Activated CD4-positive, alpha-beta T cell treated with anti-CD3 and anti-CD28 coated beads, Interleukin-2, amount 10 ng/mL, durations not matched to agents 24 days and 14 days (primary cell): ENCODE measurements at regions of chr12 and their contacts with region 1.

Region 1: DNA sequence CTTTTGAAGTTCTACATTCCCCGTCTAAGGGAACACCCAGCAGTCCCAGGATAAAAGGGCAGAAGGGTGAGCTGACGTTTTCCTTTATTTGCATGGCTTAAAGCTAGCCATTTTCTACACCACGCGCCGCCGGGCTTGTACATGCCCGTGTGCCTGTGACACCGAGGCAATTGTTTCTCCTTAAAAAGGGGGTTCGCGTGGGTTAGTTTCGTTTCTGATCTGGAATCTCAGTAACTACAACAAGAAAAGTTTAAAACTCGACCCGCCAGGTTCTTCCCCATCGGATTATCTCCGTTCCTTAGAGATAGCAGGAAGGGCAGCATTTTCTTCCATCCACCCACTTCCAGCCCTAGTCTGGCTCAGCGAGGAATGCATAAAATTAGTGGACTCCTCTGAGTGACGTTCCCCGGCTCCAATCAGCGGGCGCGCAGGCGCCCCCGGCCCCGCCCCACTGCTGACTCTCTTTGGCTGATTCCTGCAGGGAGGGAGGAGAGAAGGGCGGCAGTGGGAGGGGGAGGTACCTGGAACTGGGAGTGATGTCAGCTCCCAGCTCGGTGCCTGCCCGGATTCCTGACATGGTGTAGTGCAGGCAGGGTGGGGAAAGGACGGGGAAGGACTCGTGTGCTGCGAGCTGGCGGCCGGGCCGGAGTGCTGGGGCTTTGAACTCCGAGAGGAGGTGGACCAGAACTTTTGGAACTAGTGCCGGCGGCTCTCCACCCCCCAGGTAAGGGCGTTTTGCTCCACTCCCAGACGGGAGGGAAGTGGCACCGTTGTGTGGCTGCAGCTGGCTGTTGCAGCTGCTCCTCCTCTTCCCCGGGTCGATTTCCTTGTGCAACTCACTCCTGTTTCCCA is at the start of gene PPFIBP1:
- DNase-seq: peak; percentile 96
- H3K4me3 Mint-ChIP-seq: peak within 1 kb of the TSS; percentile 96
- H3K27ac Mint-ChIP-seq: peak within 1 kb of the TSS; percentile 91
- H3K4me1 Mint-ChIP-seq: peaks cover 34% of the 10 kb centered on the region
- H3K27me3 Mint-ChIP-seq: peaks cover 42% of the 10 kb centered on the region
- total RNA-seq, gene PPFIBP1: 29.0 and 32.0 TPM in 2 replicates

Region 2: GRCh38 chr12:27179400-27180214 is 344.3 kb before region 1 on chr12:
- intact Hi-C with region 1: no loop called
- DNase-seq: peak; percentile 80
- H3K4me3 Mint-ChIP-seq: peak overlapping the region; percentile 61
- H3K27ac Mint-ChIP-seq: peak overlapping the region; percentile 87
- H3K4me1 Mint-ChIP-seq: peaks cover 39% of the 10 kb centered on the region
- H3K27me3 Mint-ChIP-seq: no peaks in the 10 kb centered on the region

Region 3: GRCh38 chr12:27434673-27435565 is 88.9 kb before region 1 on chr12:
- intact Hi-C with region 1: loop called (anchors 5 kb)
- DNase-seq: peak; percentile 66
- H3K4me3 Mint-ChIP-seq: no peak overlapping the region
- H3K27ac Mint-ChIP-seq: peak overlapping the region; percentile 52
- H3K4me1 Mint-ChIP-seq: peaks cover 51% of the 10 kb centered on the region
- H3K27me3 Mint-ChIP-seq: no peaks in the 10 kb centered on the region

Region 4: GRCh38 chr12:27498149-27498548 is 25.7 kb before region 1 on chr12:
- intact Hi-C with region 1: loop called (anchors 1 kb)
- DNase-seq: peak; percentile 70
- H3K4me3 Mint-ChIP-seq: peak overlapping the region; percentile 34
- H3K27ac Mint-ChIP-seq: peak overlapping the region; percentile 47
- H3K4me1 Mint-ChIP-seq: peaks cover 46% of the 10 kb centered on the region
- H3K27me3 Mint-ChIP-seq: peaks cover 25% of the 10 kb centered on the region

Region 5: GRCh38 chr12:27635349-27635972 is 111.6 kb after region 1 on chr12:
- intact Hi-C with region 1: loop called (anchors 10 kb)
- DNase-seq: peak; percentile 59
- H3K4me3 Mint-ChIP-seq: no peak overlapping the region
- H3K27ac Mint-ChIP-seq: no peak overlapping the region
- H3K4me1 Mint-ChIP-seq: peaks cover 10% of the 10 kb centered on the region
- H3K27me3 Mint-ChIP-seq: peaks cover 2% of the 10 kb centered on the region